IMR-90 (cell line): ENCODE measurements at regions of chr7 and their contacts with region 1.

Region 1: DNA sequence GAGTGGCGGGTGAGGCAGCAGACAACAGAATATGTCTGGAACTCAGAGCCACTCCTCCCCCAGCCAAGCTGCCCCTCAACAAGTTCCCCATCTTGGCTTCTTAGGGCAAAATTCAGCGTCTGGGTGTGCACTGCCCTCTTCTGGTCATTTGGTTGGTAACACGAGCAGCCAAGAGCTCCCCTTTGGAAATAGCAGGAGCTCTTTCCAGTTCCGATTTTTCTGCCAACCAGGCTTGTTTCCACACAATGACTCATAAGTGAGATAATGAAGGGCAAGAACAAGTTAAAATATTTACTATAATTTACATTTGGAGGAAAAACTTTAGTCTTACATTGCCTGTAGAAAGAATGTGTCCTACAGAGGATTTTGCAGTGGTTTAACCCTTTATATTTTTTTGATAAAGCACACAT is 70.5 kb downstream of the ADCYAP1R1 start:
- DNase-seq: peak; percentile 90
- ATAC-seq: peak; percentile 94
- H3K4me3 ChIP-seq: no peak overlapping the region
- H3K27ac ChIP-seq: no peak overlapping the region
- H3K4me1 ChIP-seq: no peaks in the 10 kb centered on the region; the same call in 1 of the 2 replicates
- H3K27me3 ChIP-seq: no peaks in the 10 kb centered on the region; the same call in 1 of the 2 replicates
- CTCF ChIP-seq: peak; percentile 86
- POLR2A ChIP-seq: no peak
- RAD21 ChIP-seq: peak; percentile 84

Region 2: DNA sequence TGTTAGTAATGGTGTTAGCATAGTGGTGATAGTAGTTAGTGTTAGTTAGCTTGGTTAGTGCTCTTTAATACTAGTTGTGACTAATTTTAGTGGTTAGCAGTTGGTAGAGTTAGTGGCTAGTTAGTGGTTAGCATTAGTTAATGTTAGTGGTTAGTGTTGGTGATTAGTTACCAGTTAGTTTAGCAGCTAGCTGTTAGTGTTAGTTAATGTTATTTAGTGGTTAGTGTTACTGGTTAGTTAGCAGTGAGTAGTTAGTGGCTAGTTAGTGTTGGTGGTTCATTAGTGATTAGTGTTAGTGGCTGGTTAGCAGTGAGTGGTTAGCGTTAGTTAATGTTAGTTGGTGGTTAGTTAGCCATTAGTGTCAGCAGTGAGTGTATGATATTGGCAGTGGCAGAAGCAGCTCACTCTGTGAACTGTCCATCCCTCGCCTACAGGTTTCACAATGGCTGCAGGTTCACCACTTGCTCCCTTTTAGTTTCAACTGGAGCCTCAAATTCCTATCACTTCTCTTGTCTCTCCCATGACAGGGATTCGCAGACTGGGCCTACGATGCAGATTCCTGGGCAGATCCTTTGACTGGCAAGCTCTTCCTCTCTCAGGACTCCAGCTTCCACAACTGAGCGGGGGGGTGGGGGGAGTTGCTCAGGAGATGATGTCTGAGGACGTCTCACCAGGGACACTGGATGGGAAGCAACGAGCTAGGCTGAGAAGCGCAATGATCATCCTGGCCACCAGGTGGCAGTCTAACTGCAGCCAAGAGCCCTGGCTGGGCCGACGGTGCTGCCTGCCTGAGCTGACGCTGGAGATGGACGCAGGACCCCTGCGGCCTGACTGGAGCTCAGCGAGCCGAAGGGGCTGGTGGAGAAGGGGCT is 139.4 kb before region 1 on chr7:
- CTCF ChIA-PET with region 1: interaction called, 83 read pairs
- POLR2A ChIA-PET with region 1: interaction called, 6 read pairs
- dilution Hi-C with region 1: no loop called
- in situ Hi-C with region 1: loop called (anchors 5 kb)
- intact Hi-C with region 1: loop called (anchors 1 kb)
- DNase-seq: peak; percentile 69
- ATAC-seq: peak; percentile 100
- H3K4me3 ChIP-seq: no peak overlapping the region
- H3K27ac ChIP-seq: no peak overlapping the region
- H3K4me1 ChIP-seq: no peaks in the 10 kb centered on the region
- H3K27me3 ChIP-seq: peaks cover 39% of the 10 kb centered on the region
- CTCF ChIP-seq: peak; percentile 86
- POLR2A ChIP-seq: no peak
- RAD21 ChIP-seq: peak; percentile 84

Region 3: GRCh38 chr7:31134246-31135188 is 11.9 kb after region 1 on chr7:
- CTCF ChIA-PET with region 1: interaction called, 24 read pairs
- POLR2A ChIA-PET with region 1: interaction called, 4 read pairs
- dilution Hi-C with region 1: no loop called
- in situ Hi-C with region 1: no loop called
- intact Hi-C with region 1: no loop called
- DNase-seq: peak; percentile 54
- ATAC-seq: peak; percentile 100
- H3K4me3 ChIP-seq: no peak overlapping the region
- H3K27ac ChIP-seq: no peak overlapping the region
- H3K4me1 ChIP-seq: no peaks in the 10 kb centered on the region
- H3K27me3 ChIP-seq: no peaks in the 10 kb centered on the region; the same call in 1 of the 2 replicates
- CTCF ChIP-seq: peak; percentile 68
- POLR2A ChIP-seq: no peak
- RAD21 ChIP-seq: peak; percentile 62

Region 4: DNA sequence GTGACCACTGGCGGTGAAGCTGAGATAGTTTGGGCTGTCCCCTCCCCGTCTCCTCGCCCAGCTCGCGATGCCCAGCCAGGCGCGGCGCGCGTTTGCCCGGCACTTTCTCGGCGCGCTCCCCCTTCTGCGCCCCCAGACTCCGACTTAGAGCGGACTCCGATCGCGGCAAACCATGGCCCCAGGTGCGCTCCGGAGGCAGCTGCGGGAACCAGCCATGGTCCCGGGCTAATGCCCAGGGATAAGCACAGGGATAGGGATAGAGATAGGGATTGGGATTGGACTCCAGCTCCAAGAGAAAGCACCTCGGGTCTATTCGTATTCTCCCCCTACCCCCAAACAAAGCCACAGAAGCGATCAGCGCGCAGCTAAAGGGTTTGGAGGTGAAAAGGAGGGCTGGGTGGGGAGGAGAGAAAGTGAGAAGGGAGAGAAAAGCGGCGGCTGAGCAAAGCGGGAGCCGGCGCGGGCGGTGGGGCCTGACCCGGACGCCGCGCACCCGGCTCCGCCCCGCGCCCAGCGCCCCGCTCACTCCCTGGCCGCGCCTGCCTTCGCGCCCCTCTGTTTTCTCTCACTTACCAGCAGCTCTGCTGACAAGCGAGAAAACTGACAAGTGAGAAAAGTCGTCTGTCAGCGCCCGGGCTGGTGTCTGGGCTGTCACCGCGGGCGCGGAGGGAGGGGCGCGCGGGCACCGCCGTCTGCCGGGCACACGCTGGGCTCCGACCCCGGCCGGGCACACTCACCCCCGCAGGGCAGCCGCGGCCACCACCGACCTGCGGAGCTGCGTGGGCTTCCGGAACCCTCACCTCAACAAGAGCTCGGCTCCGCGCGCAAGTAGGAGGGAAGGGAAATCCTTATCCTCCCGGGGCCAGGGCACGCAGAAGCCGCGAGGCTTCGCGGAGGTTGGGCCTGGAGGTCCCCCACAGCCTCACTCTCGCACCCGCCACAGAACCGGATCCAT is 948.0 kb after region 1 on chr7 and contains the start of gene PDE1C:
- CTCF ChIA-PET with region 1: no interaction called
- POLR2A ChIA-PET with region 1: no interaction called
- dilution Hi-C with region 1: no loop called
- in situ Hi-C with region 1: no loop called
- intact Hi-C with region 1: no loop called
- DNase-seq: peak; percentile 19
- ATAC-seq: peak; percentile 76
- H3K4me3 ChIP-seq: peak within 1 kb of the TSS; percentile 91
- H3K27ac ChIP-seq: peak within 1 kb of the TSS; percentile 49
- H3K4me1 ChIP-seq: peaks cover 5% of the 10 kb centered on the region; the same call in 1 of the 2 replicates
- H3K27me3 ChIP-seq: no peaks in the 10 kb centered on the region
- CTCF ChIP-seq: no peak
- POLR2A ChIP-seq: no peak
- RAD21 ChIP-seq: no peak
- total RNA-seq, gene PDE1C: 53.3 and 61.5 TPM in 2 replicates